ENCODE measurements at regions of chrX and their contacts with region 1.

Region 1: DNA sequence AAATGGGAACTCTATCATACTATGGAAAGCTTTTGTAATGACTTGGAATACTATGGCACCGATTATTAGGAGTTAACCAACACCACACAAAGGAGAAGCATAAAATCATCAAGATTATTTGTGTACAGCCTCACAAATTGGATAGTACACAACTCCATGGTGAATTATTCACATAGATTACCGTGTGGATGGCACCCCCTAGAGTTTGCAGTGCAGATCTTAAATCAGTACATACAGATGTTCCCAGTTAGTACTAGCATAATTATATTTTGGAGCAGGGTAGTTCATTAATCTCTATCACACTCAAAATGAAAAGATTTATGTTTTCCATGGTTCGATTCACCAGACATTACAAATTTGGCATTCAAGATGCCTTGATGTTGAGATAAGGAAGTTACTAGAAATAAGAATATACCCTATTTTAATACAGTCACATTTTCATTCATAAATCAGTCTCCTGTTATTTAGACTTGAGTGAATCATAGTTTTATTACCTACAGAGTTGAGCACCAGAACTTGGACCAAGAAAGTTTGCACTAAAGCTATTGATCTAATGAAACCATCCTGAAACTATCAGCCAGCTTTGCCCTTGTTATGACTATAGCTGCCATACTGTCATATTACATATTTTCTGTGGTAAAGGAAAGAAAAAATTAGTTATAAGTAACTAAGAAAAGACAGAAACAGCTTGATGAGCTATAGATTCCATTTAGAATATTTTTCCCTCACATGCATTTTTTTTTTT is 531.8 kb downstream of the GLUD2 start:
- DNase-seq: peak; percentile 50
- H3K4me3 ChIP-seq: no peak overlapping the region
- H3K27ac ChIP-seq: no peak overlapping the region
- H3K4me1 ChIP-seq: no peaks in the 10 kb centered on the region
- H3K27me3 ChIP-seq: no peaks in the 10 kb centered on the region
- CTCF ChIP-seq: peak; percentile 60

Region 2: GRCh38 chrX:121308276-121308805 is 270.8 kb before region 1 on chrX:
- CTCF ChIA-PET with region 1: no interaction called
- POLR2A ChIA-PET with region 1: no interaction called
- intact Hi-C with region 1: loop called (anchors 5 kb)
- DNase-seq: peak; percentile 38
- H3K4me3 ChIP-seq: no peak overlapping the region
- H3K27ac ChIP-seq: no peak overlapping the region
- H3K4me1 ChIP-seq: no peaks in the 10 kb centered on the region
- H3K27me3 ChIP-seq: no peaks in the 10 kb centered on the region
- CTCF ChIP-seq: peak; percentile 63

Region 3: GRCh38 chrX:121322159-121322558 is 257.0 kb before region 1 on chrX:
- CTCF ChIA-PET with region 1: no interaction called
- POLR2A ChIA-PET with region 1: no interaction called
- intact Hi-C with region 1: loop called (anchors 5 kb)
- DNase-seq: no peak
- H3K4me3 ChIP-seq: no peak overlapping the region
- H3K27ac ChIP-seq: no peak overlapping the region
- H3K4me1 ChIP-seq: no peaks in the 10 kb centered on the region
- H3K27me3 ChIP-seq: no peaks in the 10 kb centered on the region
- CTCF ChIP-seq: peak; percentile 58

Region 4: GRCh38 chrX:121433289-121433688 is 145.9 kb before region 1 on chrX:
- CTCF ChIA-PET with region 1: no interaction called
- POLR2A ChIA-PET with region 1: no interaction called
- intact Hi-C with region 1: no loop called
- DNase-seq: no peak
- H3K4me3 ChIP-seq: no peak overlapping the region
- H3K27ac ChIP-seq: no peak overlapping the region
- H3K4me1 ChIP-seq: no peaks in the 10 kb centered on the region
- H3K27me3 ChIP-seq: no peaks in the 10 kb centered on the region
- CTCF ChIP-seq: no peak

Region 5: DNA sequence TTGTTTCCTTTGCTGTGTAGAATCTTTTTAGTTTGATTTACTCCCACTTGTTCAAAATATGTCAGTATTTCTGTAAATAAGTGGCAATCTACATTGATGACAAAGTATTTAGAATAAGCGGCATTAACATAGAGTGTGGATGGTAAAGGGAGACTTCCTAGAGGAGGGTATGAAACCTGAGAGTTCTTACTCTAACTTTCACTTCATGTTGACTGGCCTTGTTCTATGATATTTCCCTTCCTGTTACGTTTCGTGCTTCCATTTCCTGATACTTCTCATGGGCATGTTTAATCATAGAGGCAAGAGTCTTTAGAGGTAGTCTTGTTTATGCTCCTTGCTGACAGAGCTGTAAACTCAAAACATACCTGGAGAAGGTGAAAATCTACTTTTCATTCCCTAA is 122.9 kb before region 1 on chrX:
- CTCF ChIA-PET with region 1: no interaction called
- POLR2A ChIA-PET with region 1: no interaction called
- intact Hi-C with region 1: no loop called
- DNase-seq: no peak
- H3K4me3 ChIP-seq: no peak overlapping the region
- H3K27ac ChIP-seq: no peak overlapping the region
- H3K4me1 ChIP-seq: no peaks in the 10 kb centered on the region
- H3K27me3 ChIP-seq: no peaks in the 10 kb centered on the region
- CTCF ChIP-seq: no peak

Region 6: DNA sequence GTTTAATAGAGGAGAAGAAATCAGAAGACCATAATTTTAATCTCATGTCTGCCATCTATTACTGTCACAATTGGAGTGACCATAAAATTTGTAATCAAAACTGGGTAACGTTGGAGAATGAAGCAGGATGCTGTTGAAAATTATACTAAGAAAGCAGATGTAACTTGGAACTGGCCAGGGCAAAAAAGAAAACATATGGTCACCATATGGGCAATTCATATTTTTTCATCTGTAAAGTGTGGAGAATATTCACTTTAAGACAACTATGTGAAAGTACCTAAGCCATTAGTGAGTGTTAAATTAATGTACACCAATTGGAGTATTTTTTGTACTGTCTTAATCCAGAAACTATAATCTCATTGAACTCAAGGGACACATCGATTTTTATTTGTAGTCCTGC is 476.3 kb after region 1 on chrX:
- CTCF ChIA-PET with region 1: no interaction called
- POLR2A ChIA-PET with region 1: no interaction called
- intact Hi-C with region 1: no loop called
- DNase-seq: no peak
- H3K4me3 ChIP-seq: no peak overlapping the region
- H3K27ac ChIP-seq: no peak overlapping the region
- H3K4me1 ChIP-seq: no peaks in the 10 kb centered on the region
- H3K27me3 ChIP-seq: no peaks in the 10 kb centered on the region
- CTCF ChIP-seq: no peak

Region 7: DNA sequence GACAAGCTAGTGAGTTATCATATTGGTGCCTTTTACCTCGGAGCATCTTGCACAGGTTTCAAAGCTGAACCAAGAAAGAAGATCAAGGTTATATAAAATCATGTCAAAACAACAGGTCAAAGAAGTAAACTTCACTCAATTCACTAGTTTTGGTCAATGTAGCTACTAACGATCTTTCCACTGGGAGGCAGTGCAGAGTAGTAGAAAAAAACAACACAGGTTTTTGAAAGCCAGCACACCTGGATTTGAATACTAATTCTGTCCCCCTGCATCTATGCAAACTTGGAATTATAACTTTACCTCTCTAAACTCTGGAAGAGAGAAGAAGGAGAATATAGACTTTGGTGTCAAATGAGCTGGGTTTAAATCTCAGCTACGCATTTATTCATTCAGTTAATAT is 1871.0 kb after region 1 on chrX:
- CTCF ChIA-PET with region 1: interaction called, 11 read pairs
- POLR2A ChIA-PET with region 1: no interaction called
- intact Hi-C with region 1: no loop called
- DNase-seq: no peak
- H3K4me3 ChIP-seq: no peak overlapping the region
- H3K27ac ChIP-seq: no peak overlapping the region
- H3K4me1 ChIP-seq: no peaks in the 10 kb centered on the region
- H3K27me3 ChIP-seq: no peaks in the 10 kb centered on the region
- CTCF ChIP-seq: peak; percentile 55

Measured in A673 (cell line).